Sigmoid colon (tissue), 7 donors: ENCODE measurements at regions of chr2 and their contacts with region 1.

Region 1: GRCh38 chr2:45650851-45651414 is 542 bp upstream of the PRKCE start:
- DNase-seq: peak; percentile 98
- H3K4me3 ChIP-seq: peak overlapping the region; percentile 78 to 93 (median 88)
- H3K27ac ChIP-seq: peak overlapping the region; percentile 96 to 99 (median 99)
- H3K4me1 ChIP-seq: peaks cover 0 to 54% (median 46%) of the 10 kb centered on the region in 4 donors
- H3K27me3 ChIP-seq: no peaks in the 10 kb centered on the region
- CTCF ChIP-seq: peak; percentile 34 to 63 (median 48)
- EP300 ChIP-seq: peak in 2 of 4 donors; percentile 70 to 90
- POLR2A ChIP-seq: peak; percentile 71 to 76

Region 2: DNA sequence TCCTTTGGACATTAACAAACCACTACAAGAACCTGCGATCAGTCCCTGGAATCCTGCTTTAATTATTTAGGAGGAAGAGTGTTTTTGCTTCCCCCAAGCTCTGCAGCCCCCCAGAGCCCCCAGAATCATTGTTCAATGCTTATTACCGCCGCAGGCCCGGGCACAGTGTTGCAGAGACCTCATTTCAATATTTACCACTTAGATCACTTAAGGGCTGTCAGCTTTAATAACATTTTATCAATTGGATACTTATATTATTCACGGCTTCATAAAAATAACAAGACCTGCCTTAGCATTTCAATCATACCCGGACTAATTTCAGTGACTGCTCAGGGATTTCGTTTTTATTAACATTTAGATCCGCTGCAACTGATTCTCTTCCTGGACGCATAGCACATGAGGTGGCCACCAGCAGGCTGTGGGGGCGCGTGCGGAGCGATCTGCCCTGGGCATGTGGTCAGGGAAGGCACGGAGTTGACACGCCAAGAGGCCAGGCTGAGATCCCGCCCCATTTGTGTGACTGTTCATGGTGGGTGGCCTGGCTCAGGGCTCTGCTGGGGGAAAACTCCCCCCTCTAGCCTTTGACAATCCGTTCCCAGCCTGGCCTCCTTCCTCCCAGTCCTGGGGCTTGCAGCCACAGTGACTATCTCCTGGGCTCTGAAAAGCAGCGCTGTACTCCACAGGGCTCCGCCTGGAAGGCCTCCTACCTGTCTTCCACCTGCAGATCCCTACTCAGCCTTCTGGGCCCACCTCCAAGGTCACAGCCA is 307.5 kb before region 1 on chr2:
- intact Hi-C with region 1: no loop called
- DNase-seq: no peak
- H3K4me3 ChIP-seq: no peak overlapping the region
- H3K27ac ChIP-seq: no peak overlapping the region
- H3K4me1 ChIP-seq: no peaks in the 10 kb centered on the region
- H3K27me3 ChIP-seq: no peaks in the 10 kb centered on the region
- CTCF ChIP-seq: no peak
- EP300 ChIP-seq: no peak
- POLR2A ChIP-seq: no peak

Region 3: DNA sequence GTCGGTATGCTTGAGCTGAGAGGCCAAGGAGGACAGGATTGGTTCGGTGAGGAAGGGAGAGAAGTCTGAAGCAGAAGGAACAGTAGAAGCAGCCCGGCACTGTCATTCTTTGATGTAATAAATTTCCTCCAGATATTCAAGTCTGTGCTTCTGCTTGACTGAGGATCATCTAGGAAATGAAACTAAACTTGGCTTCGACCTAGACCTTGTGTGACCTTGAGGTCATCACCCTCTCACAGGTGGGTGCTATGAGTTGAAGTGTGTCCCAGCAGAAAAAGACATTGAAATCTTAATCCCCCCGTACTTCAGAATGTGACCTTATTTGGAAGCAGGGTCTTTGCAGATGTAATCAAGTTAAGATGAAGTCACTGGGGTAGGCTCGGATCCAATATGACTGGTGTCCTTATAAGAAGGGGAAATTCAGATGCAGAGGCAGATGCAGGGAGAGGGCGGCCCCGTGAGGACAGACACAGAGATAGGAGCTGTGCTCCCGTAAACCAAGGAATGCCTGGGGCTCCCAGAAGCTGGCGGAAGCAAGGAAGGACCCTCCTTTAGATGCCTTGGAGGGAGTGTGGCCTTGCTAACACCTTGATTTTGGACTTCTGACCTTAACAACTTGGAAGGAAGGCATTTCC is 49.6 kb after region 1 on chr2:
- intact Hi-C with region 1: loop called (anchors 2 kb)
- DNase-seq: peak; percentile 85
- H3K4me3 ChIP-seq: no peak overlapping the region
- H3K27ac ChIP-seq: peak overlapping the region; percentile 35 to 78 (median 76)
- H3K4me1 ChIP-seq: peaks cover 0 to 46% (median 39%) of the 10 kb centered on the region in 4 donors
- H3K27me3 ChIP-seq: no peaks in the 10 kb centered on the region
- CTCF ChIP-seq: peak in 2 of 4 experiments; percentile 23 to 26
- EP300 ChIP-seq: no peak
- POLR2A ChIP-seq: no peak

Region 4: DNA sequence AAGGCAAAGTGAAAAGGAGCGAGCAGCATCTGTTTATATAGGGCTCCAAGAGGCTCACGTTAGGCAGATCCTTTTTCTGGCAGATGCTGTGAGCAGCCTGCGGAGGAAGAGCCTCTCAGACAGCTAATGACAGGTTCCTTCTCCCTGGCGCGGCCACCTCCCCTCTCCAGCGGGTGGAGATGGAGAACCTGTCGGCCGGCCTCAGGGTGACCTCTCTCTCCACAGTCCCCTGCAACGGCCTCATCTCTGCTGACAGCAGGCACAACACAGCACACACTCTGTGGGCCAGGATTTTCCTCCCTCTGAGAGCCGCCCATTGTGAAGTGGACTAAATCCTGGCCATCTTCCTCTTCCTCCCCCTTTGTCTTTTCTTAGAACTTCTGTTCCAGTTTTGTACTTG is 120.3 kb after region 1 on chr2:
- intact Hi-C with region 1: loop called (anchors 2 kb)
- DNase-seq: peak; percentile 90
- H3K4me3 ChIP-seq: peak overlapping the region; percentile 11 to 37 (median 28)
- H3K27ac ChIP-seq: peak overlapping the region; percentile 74 to 89 (median 82)
- H3K4me1 ChIP-seq: peaks cover 0 to 50% (median 33%) of the 10 kb centered on the region in 4 donors
- H3K27me3 ChIP-seq: no peaks in the 10 kb centered on the region
- CTCF ChIP-seq: no peak
- EP300 ChIP-seq: peak in 1 of 4 donors; percentile 3
- POLR2A ChIP-seq: no peak

Region 5: GRCh38 chr2:45821564-45822271 is 170.8 kb after region 1 on chr2:
- intact Hi-C with region 1: loop called (anchors 5 kb)
- DNase-seq: peak; percentile 88
- H3K4me3 ChIP-seq: no peak overlapping the region
- H3K27ac ChIP-seq: peak overlapping the region; percentile 71 to 87 (median 79)
- H3K4me1 ChIP-seq: peaks cover 0 to 95% (median 78%) of the 10 kb centered on the region in 4 donors
- H3K27me3 ChIP-seq: no peaks in the 10 kb centered on the region
- CTCF ChIP-seq: no peak
- EP300 ChIP-seq: peak in 2 of 4 donors; percentile 47 to 73
- POLR2A ChIP-seq: no peak

Region 6: GRCh38 chr2:45882707-45883602 is 232.0 kb after region 1 on chr2:
- intact Hi-C with region 1: loop called (anchors 1 kb)
- DNase-seq: peak; percentile 95
- H3K4me3 ChIP-seq: no peak overlapping the region
- H3K27ac ChIP-seq: peak overlapping the region; percentile 61 to 88 (median 80)
- H3K4me1 ChIP-seq: peaks cover 0 to 86% (median 85%) of the 10 kb centered on the region in 4 donors
- H3K27me3 ChIP-seq: no peaks in the 10 kb centered on the region
- CTCF ChIP-seq: no peak
- EP300 ChIP-seq: peak; percentile 24 to 84 (median 70)
- POLR2A ChIP-seq: no peak

Region 7: DNA sequence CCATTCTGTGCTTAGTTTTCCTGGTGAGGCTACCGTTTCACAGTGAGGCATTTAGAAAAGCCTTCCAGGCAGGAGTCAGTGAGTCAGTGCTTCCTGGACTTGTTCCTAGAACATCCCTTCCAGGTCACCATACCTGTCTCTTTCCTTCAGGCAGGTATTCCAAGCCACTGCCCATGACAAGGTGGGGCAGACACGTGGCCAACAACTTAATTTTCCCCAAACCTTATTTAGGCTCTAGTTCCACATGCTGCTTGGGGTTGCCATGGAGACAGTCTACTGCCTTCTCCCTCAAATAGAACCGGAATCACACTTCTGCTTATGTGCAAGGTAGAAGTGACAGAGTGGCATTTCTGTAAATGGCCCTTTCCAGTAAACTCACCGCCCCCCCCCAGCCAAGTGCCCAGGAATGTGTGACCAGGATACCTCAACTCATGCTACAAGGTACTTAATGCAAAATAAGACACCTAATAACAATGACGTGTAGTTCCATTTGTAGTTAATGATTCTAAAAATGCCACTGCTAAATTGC is 258.8 kb after region 1 on chr2:
- intact Hi-C with region 1: no loop called
- DNase-seq: no peak
- H3K4me3 ChIP-seq: no peak overlapping the region
- H3K27ac ChIP-seq: no peak overlapping the region
- H3K4me1 ChIP-seq: peaks cover 0 to 8% (median 7%) of the 10 kb centered on the region in 4 donors
- H3K27me3 ChIP-seq: no peaks in the 10 kb centered on the region
- CTCF ChIP-seq: no peak
- EP300 ChIP-seq: no peak
- POLR2A ChIP-seq: no peak